Mammary epithelial cell (primary cell): ENCODE measurements at regions of chr9 and their contacts with region 1.

Region 1: GRCh38 chr9:806285-807156 is 35.0 kb upstream of the DMRT1 start:
- DNase-seq: peak; percentile 24
- H3K4me3 ChIP-seq: no peak overlapping the region
- H3K27ac ChIP-seq: no peak overlapping the region
- H3K4me1 ChIP-seq: peaks cover 10% of the 10 kb centered on the region
- H3K27me3 ChIP-seq: no peaks in the 10 kb centered on the region
- CTCF ChIP-seq: peak; percentile 73 to 76

Region 2: DNA sequence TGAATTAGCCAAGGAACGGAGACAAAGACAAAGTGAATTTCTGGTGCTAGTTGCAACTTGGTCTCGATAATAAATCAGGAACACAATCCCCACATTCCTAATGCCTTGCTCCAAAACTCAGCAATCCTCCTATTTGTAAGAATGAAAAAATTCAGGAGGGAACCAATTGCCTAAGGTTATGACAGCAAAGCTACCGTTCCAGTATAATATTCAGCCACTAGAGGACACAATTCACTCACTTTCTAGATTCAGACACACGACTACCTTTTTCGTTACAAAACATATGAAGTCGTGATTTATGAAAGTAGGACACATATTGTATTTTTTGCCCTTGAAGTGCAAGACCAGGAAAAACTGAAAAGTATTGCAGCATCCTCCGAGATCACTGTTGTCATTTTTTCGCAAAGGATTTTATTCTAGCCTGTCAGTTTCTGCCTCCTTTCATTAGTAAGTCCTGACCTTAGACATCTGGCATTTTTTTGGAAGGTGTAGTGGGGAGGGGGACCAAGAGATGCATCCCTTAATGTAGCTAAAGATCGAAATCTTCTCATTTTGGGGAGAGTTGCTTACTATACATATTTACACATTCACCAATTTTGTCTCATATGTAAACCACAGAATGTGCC is 458.7 kb before region 1 on chr9:
- CTCF ChIA-PET with region 1: no interaction called
- dilution Hi-C with region 1: no loop called
- in situ Hi-C with region 1: no loop called
- intact Hi-C with region 1: loop called (anchors 5 kb)
- DNase-seq: peak; percentile 51
- H3K4me3 ChIP-seq: no peak overlapping the region
- H3K27ac ChIP-seq: no peak overlapping the region
- H3K4me1 ChIP-seq: peaks cover 7% of the 10 kb centered on the region
- H3K27me3 ChIP-seq: no peaks in the 10 kb centered on the region
- CTCF ChIP-seq: peak; percentile 87 to 98

Region 3: DNA sequence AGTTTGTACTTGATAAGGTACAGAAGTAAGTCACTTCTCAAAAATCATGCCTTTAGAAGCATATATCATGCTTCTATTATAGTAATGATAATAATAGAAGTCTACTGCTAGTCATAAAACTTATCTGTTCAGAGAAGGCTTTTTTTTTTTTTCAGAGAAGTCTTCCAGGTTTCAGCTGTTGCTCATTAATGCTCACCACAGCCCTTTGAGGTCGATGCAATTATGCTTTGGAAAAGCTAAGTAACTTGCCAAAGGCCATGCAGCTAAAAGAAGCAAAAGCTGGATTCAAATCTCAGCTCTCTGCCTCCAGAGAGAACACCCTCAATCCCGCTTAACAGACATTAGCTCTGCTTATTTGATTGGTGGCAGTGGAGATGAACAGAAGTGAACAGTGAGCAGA is 441.1 kb before region 1 on chr9:
- CTCF ChIA-PET with region 1: interaction called, 10 read pairs
- dilution Hi-C with region 1: no loop called
- in situ Hi-C with region 1: no loop called
- intact Hi-C with region 1: no loop called
- DNase-seq: no peak
- H3K4me3 ChIP-seq: no peak overlapping the region
- H3K27ac ChIP-seq: no peak overlapping the region
- H3K4me1 ChIP-seq: no peaks in the 10 kb centered on the region
- H3K27me3 ChIP-seq: no peaks in the 10 kb centered on the region
- CTCF ChIP-seq: no peak

Region 4: DNA sequence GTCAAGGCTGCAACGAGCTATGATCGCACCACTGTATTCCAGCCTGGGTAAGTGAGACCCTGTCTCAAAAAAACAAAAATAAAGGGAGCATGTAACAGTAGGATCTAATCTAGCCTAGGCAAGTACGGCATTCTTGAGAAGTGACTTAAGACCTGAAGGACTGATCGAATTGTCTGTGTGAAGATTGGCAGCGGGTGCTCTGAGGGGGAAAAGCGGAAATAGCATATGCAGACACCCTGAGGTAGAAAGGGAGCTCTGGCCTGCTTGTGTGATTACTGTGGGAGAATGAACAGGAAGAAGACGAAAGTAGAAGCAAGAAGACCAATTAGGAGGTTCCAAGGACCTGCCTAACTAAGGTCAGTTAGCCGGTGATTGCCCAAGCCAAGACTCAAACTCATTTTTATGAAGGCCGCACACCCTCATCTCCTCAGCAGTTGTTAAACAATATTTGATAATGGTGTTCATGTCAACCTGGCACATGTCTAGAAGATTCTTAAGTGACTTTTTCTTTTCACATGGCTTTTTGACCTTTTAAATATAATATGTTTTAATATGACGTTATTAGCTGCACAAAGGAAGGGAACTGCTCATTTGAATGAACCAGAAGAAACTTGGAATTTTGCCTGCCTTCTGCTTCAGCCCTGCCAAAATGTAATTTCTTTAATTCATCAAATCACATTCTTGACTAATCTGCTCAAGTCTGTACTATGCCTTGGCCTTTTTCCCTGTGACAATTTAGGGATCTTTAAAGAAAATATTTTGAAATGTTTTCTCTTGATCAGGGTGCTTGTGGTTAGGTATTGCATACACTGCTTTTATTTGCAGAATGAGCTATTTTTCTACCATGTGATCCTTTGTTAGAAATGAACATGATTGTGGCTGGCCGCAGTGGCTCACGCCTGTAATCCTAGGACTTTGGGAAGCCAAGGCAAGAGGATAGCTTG is 254.3 kb before region 1 on chr9:
- CTCF ChIA-PET with region 1: interaction called, 10 read pairs
- dilution Hi-C with region 1: no loop called
- in situ Hi-C with region 1: no loop called
- intact Hi-C with region 1: no loop called
- DNase-seq: no peak
- H3K4me3 ChIP-seq: no peak overlapping the region
- H3K27ac ChIP-seq: no peak overlapping the region
- H3K4me1 ChIP-seq: peaks cover 9% of the 10 kb centered on the region
- H3K27me3 ChIP-seq: no peaks in the 10 kb centered on the region
- CTCF ChIP-seq: no peak

Region 5: GRCh38 chr9:751137-752051 is 55.1 kb before region 1 on chr9:
- CTCF ChIA-PET with region 1: no interaction called
- dilution Hi-C with region 1: no loop called
- in situ Hi-C with region 1: no loop called
- intact Hi-C with region 1: no loop called
- DNase-seq: peak; percentile 56
- H3K4me3 ChIP-seq: no peak overlapping the region
- H3K27ac ChIP-seq: peak overlapping the region; percentile 92
- H3K4me1 ChIP-seq: peaks cover 70% of the 10 kb centered on the region
- H3K27me3 ChIP-seq: no peaks in the 10 kb centered on the region
- CTCF ChIP-seq: no peak

Region 6: GRCh38 chr9:882478-882877 is 76.0 kb after region 1 on chr9:
- CTCF ChIA-PET with region 1: no interaction called
- dilution Hi-C with region 1: no loop called
- in situ Hi-C with region 1: no loop called
- intact Hi-C with region 1: no loop called
- DNase-seq: no peak
- H3K4me3 ChIP-seq: no peak overlapping the region
- H3K27ac ChIP-seq: no peak overlapping the region
- H3K4me1 ChIP-seq: no peaks in the 10 kb centered on the region
- H3K27me3 ChIP-seq: no peaks in the 10 kb centered on the region
- CTCF ChIP-seq: no peak